Gastrocnemius medialis (tissue), 4 donors: ENCODE measurements at regions of chr14 and their contacts with region 1.

Region 1: DNA sequence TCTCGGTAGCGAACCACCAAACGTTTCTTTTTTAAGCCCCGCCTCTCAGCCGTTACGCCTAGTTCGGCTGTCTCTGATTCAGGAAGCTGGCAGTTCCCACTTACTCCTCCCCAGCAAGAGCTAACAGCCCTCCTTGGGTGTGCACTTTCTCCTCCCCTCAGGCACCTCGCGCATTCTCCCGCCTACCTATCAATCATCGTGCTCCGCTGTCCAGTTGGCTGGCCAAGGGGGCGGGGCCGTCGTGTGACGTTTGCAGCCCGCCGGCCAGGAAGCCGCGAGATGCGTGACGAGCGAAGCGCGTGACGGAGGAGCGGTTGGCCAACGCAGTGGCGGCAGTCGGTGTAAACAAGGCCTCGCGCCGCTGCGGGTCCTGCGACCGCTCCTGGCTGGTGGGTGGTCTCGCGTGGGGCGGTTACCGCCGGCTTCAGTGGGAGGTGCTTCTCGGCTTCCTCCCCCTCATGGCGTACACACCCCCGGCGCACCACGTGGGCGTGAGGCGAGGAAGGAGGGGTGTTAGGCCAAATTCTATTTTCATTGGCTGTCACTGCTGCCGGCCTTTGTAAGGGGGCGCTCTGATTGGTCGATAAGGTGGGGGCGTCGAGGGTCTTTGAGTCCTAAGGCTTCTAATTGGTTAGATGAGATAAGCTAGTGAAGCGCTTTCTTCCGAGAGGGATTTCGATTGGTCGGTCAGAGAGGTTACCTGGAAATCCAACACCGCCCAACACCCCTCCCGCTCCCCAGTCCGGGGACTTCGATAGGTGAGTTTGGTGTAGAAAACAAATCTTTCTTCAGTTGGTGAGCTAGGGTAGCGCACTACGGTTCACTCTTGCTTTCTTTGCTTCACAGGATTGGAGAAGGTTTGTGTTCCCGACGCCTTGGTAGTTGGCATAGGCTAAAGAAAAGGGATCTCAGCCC is at the starts of genes DCAF11 and NRL:
- DNase-seq: peak; percentile 99
- ATAC-seq: peak; percentile 87 to 89
- H3K4me3 ChIP-seq: peak within 1 kb of the TSS; percentile 74 to 93 (median 78)
- H3K27ac ChIP-seq: peak within 1 kb of the TSS; percentile 92 to 99 (median 98)
- H3K4me1 ChIP-seq: peaks cover 16 to 19% of the 10 kb centered on the region in 2 donors
- H3K27me3 ChIP-seq: no peaks in the 10 kb centered on the region
- CTCF ChIP-seq: peak in 1 of 5 experiments; percentile 32
- POLR2A ChIP-seq: peak in 1 of 2 donors; percentile 28
- total RNA-seq, gene DCAF11: 52.4 to 113 (median 88.7) TPM
- total RNA-seq, gene NRL: 0.82 to 4.5 (median 2.4) TPM

Region 2: DNA sequence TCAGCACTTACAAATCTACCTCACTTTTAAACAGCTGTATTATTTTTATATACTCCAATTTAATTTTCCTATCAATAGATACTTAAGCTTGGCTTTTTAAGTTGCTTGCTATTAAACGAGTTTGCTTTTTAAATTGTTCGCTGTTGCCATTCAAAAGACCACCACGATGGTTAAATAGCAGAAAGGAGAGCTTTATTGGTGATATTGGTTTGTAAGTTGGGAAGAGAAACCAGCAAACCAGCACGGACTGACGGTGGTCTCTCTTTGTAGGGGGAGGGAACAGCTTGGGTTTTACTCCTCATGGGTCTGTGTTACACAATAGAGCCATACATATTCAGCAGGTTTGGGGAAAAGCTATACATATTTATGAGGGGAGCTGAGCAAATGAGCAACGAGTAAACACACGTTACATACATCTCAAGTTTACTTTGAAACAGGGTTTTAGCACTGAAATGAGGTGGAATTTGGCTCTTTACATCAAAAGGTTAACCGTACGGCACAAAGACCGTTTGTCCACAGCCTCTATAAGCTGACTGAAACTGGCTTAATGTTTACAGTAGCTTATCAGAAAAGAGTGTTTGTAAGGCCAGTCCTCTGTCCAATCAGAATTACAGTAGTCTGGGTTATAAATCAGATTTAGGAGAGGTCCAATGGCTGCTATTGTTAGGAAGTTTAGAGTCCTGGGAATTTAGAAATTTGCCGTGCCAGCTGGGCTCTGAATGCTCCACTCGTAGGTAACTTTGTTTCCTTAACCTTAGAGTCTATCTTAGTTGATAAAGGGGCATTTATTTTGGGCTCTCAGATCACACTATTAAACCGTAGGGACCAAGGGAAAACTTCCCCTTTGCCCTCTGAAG is 230.9 kb before region 1 on chr14:
- in situ Hi-C with region 1: no loop called
- intact Hi-C with region 1: no loop called
- DNase-seq: no peak
- ATAC-seq: no peak
- H3K4me3 ChIP-seq: no peak overlapping the region
- H3K27ac ChIP-seq: no peak overlapping the region
- H3K4me1 ChIP-seq: no peaks in the 10 kb centered on the region
- H3K27me3 ChIP-seq: no peaks in the 10 kb centered on the region
- CTCF ChIP-seq: no peak
- POLR2A ChIP-seq: no peak

Region 3: DNA sequence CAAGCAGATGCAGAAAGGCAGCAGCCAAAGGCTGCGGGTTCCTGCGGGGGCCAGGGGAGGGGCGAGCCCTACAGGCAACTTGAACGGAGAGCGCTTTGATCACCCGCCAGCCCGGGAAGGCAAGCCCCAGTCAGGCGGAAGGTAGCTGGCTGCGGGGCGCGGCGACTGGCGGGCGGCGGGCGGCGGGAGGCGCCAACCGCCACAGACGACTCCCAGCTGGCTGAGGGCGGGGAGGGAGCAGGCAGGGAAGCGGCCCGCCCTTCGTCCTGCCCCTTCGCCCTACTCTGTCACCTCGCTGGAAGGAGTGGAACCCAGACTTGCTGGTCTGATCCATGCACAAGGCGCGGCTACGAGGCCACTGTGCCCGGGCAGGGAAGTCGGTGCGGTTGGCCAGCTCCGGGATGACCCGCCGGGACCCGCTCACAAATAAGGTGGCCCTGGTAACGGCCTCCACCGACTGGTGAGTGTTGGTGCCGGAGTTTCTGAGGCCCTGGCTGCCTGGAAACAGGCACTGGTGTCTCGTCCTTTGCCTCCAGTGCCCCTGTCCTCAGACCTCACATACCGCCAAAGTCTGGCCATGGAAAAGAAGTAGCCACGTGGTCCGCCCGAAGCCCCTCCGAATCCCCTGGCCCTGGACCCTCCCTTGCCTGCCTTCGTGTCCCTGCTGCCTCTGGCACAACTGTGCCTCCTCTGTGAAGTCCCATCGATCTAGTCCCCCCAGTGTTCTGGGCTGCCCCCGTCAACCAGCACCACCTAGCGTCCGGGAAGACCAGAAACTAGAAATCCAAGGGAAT is 78.4 kb before region 1 on chr14:
- in situ Hi-C with region 1: no loop called
- intact Hi-C with region 1: loop called (anchors 1 kb)
- DNase-seq: peak; percentile 76 to 82
- ATAC-seq: peak; percentile 76 to 80
- H3K4me3 ChIP-seq: peak overlapping the region; percentile 50 to 93 (median 64)
- H3K27ac ChIP-seq: peak overlapping the region; percentile 81 to 96 (median 94)
- H3K4me1 ChIP-seq: peaks cover 11 to 25% of the 10 kb centered on the region in 2 donors
- H3K27me3 ChIP-seq: no peaks in the 10 kb centered on the region
- CTCF ChIP-seq: peak; percentile 73 to 86 (median 79)
- POLR2A ChIP-seq: peak; percentile 43 to 68

Region 4: DNA sequence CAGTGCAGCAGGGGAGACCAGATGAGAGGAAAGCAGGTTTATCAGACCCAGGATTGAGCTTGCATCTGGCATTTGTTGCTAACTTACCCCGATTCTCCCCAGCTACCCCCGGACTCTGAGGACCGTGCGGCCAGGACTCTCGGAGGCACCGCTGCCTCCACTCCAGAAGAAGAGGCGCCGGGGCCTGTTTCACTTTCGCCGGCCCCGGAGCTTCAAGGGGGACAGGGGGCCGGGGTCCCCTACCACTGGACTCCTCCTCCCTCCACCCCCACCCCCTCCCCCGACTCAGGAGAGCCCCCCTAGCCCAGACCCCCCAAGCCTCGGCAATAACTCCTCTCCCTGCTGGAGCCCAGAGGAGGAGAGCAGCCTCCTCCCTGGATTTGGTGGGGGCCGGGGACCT is 49.9 kb before region 1 on chr14:
- in situ Hi-C with region 1: no loop called
- intact Hi-C with region 1: no loop called
- DNase-seq: no peak
- ATAC-seq: no peak
- H3K4me3 ChIP-seq: no peak overlapping the region
- H3K27ac ChIP-seq: no peak overlapping the region
- H3K4me1 ChIP-seq: no peaks in the 10 kb centered on the region
- H3K27me3 ChIP-seq: no peaks in the 10 kb centered on the region
- CTCF ChIP-seq: no peak
- POLR2A ChIP-seq: no peak

Region 5: GRCh38 chr14:24083462-24083861 is 31.3 kb before region 1 on chr14:
- in situ Hi-C with region 1: no loop called
- intact Hi-C with region 1: no loop called
- DNase-seq: no peak
- ATAC-seq: no peak
- H3K4me3 ChIP-seq: no peak overlapping the region
- H3K27ac ChIP-seq: no peak overlapping the region
- H3K4me1 ChIP-seq: peaks cover 0 to 10% of the 10 kb centered on the region in 2 donors
- H3K27me3 ChIP-seq: no peaks in the 10 kb centered on the region
- CTCF ChIP-seq: no peak
- POLR2A ChIP-seq: no peak

Region 6: DNA sequence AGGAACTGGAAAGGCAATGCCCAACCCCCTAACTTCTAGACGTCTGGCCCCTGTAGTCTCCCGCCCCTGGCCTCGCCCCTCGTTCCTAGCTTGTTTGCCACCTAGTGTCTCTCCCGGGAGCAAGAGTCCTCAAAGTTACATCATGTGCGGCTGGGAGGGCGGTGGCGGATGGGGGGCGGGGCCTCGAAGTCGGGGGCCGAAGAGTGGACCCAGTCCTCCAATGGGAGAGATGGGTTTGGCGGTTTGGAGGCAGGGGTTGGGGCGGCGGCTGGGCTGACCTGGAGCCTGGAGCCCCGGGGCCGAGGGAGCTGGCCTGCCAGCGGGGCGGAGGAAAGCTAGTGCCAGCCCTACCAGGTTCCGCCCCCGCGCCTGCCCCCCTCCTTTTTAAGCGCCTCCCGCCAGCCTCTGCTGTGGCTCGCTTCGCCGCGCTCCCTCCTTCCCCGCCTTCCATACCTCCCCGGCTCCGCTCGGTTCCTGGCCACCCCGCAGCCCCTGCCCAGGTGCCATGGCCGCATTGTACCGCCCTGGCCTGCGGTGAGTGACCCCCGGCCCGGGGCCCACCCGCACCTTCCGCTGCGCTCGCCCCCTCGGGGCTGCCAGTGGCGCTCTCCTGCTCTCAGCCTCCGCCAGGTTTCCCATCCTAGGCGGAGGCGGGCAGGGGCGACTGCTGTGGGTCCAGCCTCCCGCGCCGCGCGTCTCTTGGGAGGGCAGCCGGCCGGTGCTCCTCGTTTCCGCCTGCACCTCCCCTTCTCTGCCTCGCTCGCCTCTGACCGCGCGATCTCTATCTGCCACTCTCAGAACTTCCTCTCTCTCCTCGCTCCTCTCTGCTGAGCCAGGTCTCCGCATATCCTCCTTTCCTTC is 20.7 kb before region 1 on chr14 and contains the start of gene PCK2:
- in situ Hi-C with region 1: no loop called
- intact Hi-C with region 1: loop called (anchors 2 kb)
- DNase-seq: peak; percentile 88 to 93
- ATAC-seq: peak; percentile 88 to 90
- H3K4me3 ChIP-seq: peak within 1 kb of the TSS; percentile 75 to 97 (median 90)
- H3K27ac ChIP-seq: peak within 1 kb of the TSS; percentile 83 to 88 (median 88)
- H3K4me1 ChIP-seq: peaks cover 10 to 14% of the 10 kb centered on the region in 2 donors
- H3K27me3 ChIP-seq: no peaks in the 10 kb centered on the region
- CTCF ChIP-seq: peak in 1 of 5 experiments; percentile 16
- POLR2A ChIP-seq: peak; percentile 53
- total RNA-seq, gene PCK2: 1.9 to 9.8 (median 3.6) TPM

Region 7: GRCh38 chr14:24130717-24131548 is 16.1 kb after region 1 on chr14:
- in situ Hi-C with region 1: no loop called
- intact Hi-C with region 1: loop called (anchors 1 kb)
- DNase-seq: peak; percentile 77 to 90
- ATAC-seq: peak; percentile 79 to 89
- H3K4me3 ChIP-seq: peak overlapping the region; percentile 44 to 56 (median 48)
- H3K27ac ChIP-seq: peak overlapping the region; percentile 95 to 99 (median 98)
- H3K4me1 ChIP-seq: peaks cover 34 to 40% of the 10 kb centered on the region in 2 donors
- H3K27me3 ChIP-seq: no peaks in the 10 kb centered on the region
- CTCF ChIP-seq: no peak
- POLR2A ChIP-seq: peak in 1 of 2 donors; percentile 40

Region 8: GRCh38 chr14:24146978-24147760 is 32.4 kb after region 1 on chr14 and contains the start of gene RNF31:
- in situ Hi-C with region 1: no loop called
- intact Hi-C with region 1: loop called (anchors 1 kb)
- DNase-seq: peak; percentile 98 to 99
- ATAC-seq: peak; percentile 89 to 94
- H3K4me3 ChIP-seq: peak within 1 kb of the TSS; percentile 75 to 92 (median 84)
- H3K27ac ChIP-seq: peak within 1 kb of the TSS; percentile 92 to 97 (median 92)
- H3K4me1 ChIP-seq: peaks cover 21% of the 10 kb centered on the region in 2 donors
- H3K27me3 ChIP-seq: no peaks in the 10 kb centered on the region
- CTCF ChIP-seq: no peak
- POLR2A ChIP-seq: peak; percentile 72 to 82
- total RNA-seq, gene RNF31: 63.3 to 140 (median 82.4) TPM

Region 9: GRCh38 chr14:24442273-24443052 is 327.7 kb after region 1 on chr14 and contains the start of gene SDR39U1:
- in situ Hi-C with region 1: no loop called
- intact Hi-C with region 1: loop called (anchors 1 kb)
- DNase-seq: peak; percentile 96 to 97
- ATAC-seq: peak; percentile 99
- H3K4me3 ChIP-seq: peak within 1 kb of the TSS; percentile 71 to 89 (median 82)
- H3K27ac ChIP-seq: peak within 1 kb of the TSS; percentile 97 to 99 (median 98)
- H3K4me1 ChIP-seq: peaks cover 35 to 39% of the 10 kb centered on the region in 2 donors
- H3K27me3 ChIP-seq: peaks cover 0 to 9% (median 0%) of the 10 kb centered on the region in 3 donors
- CTCF ChIP-seq: no peak
- POLR2A ChIP-seq: peak; percentile 83 to 88
- total RNA-seq, gene SDR39U1: 21.7 to 51.4 (median 38.3) TPM